ENCODE measurements at regions of chr5 and their contacts with region 1.

Region 1: GRCh38 chr5:157761690-157762621 is 18.4 kb downstream of the LSM11 start:
- DNase-seq: peak; percentile 11
- H3K4me3 Mint-ChIP-seq: no peak overlapping the region
- H3K27ac Mint-ChIP-seq: no peak overlapping the region
- H3K4me1 Mint-ChIP-seq: peaks cover 8% of the 10 kb centered on the region
- H3K27me3 Mint-ChIP-seq: peaks cover 2% of the 10 kb centered on the region

Region 2: DNA sequence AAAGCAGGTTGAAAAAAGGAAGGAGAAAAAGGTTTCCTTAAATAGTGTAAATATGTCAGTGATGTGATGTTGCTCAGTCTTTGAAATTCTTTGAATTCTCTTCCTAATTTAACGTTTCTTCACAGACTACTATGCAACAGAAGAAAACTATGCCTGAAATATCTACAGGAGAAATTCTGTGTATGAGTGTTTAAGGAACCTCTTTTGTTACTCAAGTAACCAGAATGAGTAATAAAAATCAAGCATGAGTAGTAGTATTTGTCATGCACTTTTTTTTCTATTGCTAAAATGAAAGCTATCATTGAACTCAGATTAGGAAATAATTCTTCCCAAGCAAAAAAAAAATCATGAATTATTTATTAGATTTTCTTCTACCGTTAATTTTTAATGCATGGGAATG is 51.1 kb before region 1 on chr5:
- intact Hi-C with region 1: no loop called
- DNase-seq: no peak
- H3K4me3 Mint-ChIP-seq: no peak overlapping the region
- H3K27ac Mint-ChIP-seq: no peak overlapping the region
- H3K4me1 Mint-ChIP-seq: peaks cover 30% of the 10 kb centered on the region
- H3K27me3 Mint-ChIP-seq: peaks cover 8% of the 10 kb centered on the region

Region 3: GRCh38 chr5:157808043-157808442 is 46.1 kb after region 1 on chr5:
- intact Hi-C with region 1: no loop called
- DNase-seq: no peak
- H3K4me3 Mint-ChIP-seq: no peak overlapping the region
- H3K27ac Mint-ChIP-seq: no peak overlapping the region
- H3K4me1 Mint-ChIP-seq: peaks cover 6% of the 10 kb centered on the region
- H3K27me3 Mint-ChIP-seq: no peaks in the 10 kb centered on the region

Region 4: DNA sequence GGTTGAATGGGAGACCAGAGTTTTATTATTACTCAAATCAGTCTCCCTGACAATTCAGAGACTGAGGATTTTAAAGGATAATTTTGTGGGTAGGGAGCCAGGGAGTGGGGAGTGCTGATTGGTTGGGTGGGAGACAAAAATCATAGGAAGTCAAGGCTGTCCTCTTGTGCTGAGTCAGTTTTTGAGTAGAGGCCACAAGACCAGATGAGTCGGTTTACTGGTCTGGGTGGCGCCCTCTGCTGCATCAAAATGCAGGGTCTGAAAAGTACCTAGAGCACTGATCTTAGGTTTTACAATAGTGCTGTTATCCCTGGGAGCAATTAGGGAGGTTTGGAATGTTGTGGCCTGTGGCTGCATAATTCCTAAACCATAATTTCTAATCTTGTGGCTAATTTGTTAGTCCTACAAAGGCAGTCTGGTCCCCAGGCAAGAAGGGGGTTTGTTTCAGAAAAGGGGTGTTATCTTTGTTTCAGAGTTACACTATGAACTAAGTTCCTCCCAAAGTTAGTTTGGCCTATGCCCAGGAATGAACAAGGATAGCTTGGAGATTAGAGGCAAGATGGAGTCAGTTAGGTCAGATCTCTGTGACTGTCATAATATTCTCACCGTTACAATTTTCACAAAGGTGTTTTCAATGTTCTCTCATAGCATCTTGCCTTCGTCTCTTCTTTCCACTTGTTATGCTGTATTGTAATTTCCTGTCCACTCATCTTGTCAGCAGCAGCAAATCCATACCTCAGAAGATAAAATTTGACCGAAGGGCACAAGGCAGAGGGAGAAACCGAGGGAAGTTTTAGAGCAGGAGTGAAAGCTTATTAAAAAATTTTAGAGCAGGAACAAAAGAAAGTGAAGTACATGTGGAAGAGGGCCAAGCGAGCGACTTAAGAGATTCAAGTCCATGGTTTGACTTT is 156.2 kb after region 1 on chr5:
- intact Hi-C with region 1: loop called (anchors 1 kb)
- DNase-seq: peak; percentile 33
- H3K4me3 Mint-ChIP-seq: no peak overlapping the region
- H3K27ac Mint-ChIP-seq: no peak overlapping the region
- H3K4me1 Mint-ChIP-seq: peaks cover 30% of the 10 kb centered on the region
- H3K27me3 Mint-ChIP-seq: no peaks in the 10 kb centered on the region

Region 5: GRCh38 chr5:157948738-157949410 is 186.9 kb after region 1 on chr5:
- intact Hi-C with region 1: loop called (anchors 1 kb)
- DNase-seq: peak; percentile 58
- H3K4me3 Mint-ChIP-seq: no peak overlapping the region
- H3K27ac Mint-ChIP-seq: no peak overlapping the region
- H3K4me1 Mint-ChIP-seq: peaks cover 5% of the 10 kb centered on the region
- H3K27me3 Mint-ChIP-seq: peaks cover 14% of the 10 kb centered on the region

Region 6: GRCh38 chr5:157994906-157995519 is 233.1 kb after region 1 on chr5:
- intact Hi-C with region 1: loop called (anchors 1 kb)
- DNase-seq: peak; percentile 30
- H3K4me3 Mint-ChIP-seq: peak overlapping the region; percentile 37
- H3K27ac Mint-ChIP-seq: no peak overlapping the region
- H3K4me1 Mint-ChIP-seq: peaks cover 18% of the 10 kb centered on the region
- H3K27me3 Mint-ChIP-seq: peaks cover 39% of the 10 kb centered on the region

Region 7: GRCh38 chr5:158313733-158314464 is 551.9 kb after region 1 on chr5:
- intact Hi-C with region 1: no loop called
- DNase-seq: no peak
- H3K4me3 Mint-ChIP-seq: no peak overlapping the region
- H3K27ac Mint-ChIP-seq: no peak overlapping the region
- H3K4me1 Mint-ChIP-seq: no peaks in the 10 kb centered on the region
- H3K27me3 Mint-ChIP-seq: peaks cover 5% of the 10 kb centered on the region

Region 8: GRCh38 chr5:158754018-158754514 is 992.1 kb after region 1 on chr5:
- intact Hi-C with region 1: no loop called
- DNase-seq: no peak
- H3K4me3 Mint-ChIP-seq: no peak overlapping the region
- H3K27ac Mint-ChIP-seq: no peak overlapping the region
- H3K4me1 Mint-ChIP-seq: peaks cover 9% of the 10 kb centered on the region
- H3K27me3 Mint-ChIP-seq: peaks cover 12% of the 10 kb centered on the region

Region 9: DNA sequence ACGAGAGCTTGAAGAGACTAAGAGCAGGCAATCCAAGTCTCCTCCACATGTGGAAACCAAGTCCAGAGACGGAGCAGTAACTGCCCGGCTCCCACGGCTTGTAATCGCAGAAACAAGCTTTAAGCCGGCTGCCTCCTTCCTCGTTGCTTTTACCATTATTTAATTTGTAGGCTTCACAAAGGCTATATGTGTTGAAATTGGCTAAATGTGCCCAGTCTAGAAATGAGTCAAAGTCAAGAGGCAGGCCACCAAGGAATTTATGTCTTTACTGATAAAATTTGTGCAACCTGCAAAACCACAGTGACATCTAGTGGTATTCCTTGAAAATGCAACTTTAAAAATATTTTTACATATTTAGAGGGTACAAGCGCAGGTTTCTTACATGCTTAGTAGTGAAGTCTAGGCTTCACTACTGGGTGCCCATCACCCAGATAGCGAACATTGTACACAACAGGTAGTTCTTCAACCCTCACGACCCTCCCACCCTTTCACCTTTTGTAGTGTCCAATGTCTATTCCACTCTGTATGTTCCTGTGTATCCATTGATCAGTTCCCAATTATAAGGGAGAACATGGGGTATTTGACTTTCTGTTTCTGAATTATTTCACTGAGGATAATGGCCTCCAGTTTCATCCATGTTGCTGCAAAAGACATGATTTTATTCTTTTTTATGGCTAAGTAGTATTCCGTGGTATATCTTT is 1371.2 kb after region 1 on chr5:
- intact Hi-C with region 1: loop called (anchors 1 kb)
- DNase-seq: no peak
- H3K4me3 Mint-ChIP-seq: no peak overlapping the region
- H3K27ac Mint-ChIP-seq: no peak overlapping the region
- H3K4me1 Mint-ChIP-seq: no peaks in the 10 kb centered on the region
- H3K27me3 Mint-ChIP-seq: peaks cover 23% of the 10 kb centered on the region